ENCODE measurements at regions of chr6 and their contacts with region 1.

Region 1: GRCh38 chr6:2876210-2877056 is 26.7 kb downstream of the SERPINB9 start:
- DNase-seq: no peak
- ATAC-seq: peak; percentile 51
- H3K4me3 ChIP-seq: 0 out of 2 replicates have a peak overlapping the region, but pooled peaks have one; percentile 18
- H3K27ac ChIP-seq: no peak overlapping the region
- H3K4me1 ChIP-seq: peaks cover 36% of the 10 kb centered on the region
- H3K27me3 ChIP-seq: no peaks in the 10 kb centered on the region
- CTCF ChIP-seq: no peak
- EP300 ChIP-seq: no peak
- POLR2A ChIP-seq: no peak; the same call in 1 of the 2 replicates
- RAD21 ChIP-seq: no peak

Region 2: GRCh38 chr6:2237001-2237400 is 639.4 kb before region 1 on chr6:
- CTCF ChIA-PET with region 1: no interaction called
- POLR2A ChIA-PET with region 1: no interaction called
- RAD21 ChIA-PET with region 1: no interaction called
- SMC1A ChIA-PET with region 1: no interaction called
- in situ Hi-C with region 1: no loop called
- intact Hi-C with region 1: no loop called
- DNase-seq: no peak
- ATAC-seq: no peak
- H3K4me3 ChIP-seq: no peak overlapping the region
- H3K27ac ChIP-seq: no peak overlapping the region
- H3K4me1 ChIP-seq: peaks cover 8% of the 10 kb centered on the region
- H3K27me3 ChIP-seq: no peaks in the 10 kb centered on the region
- CTCF ChIP-seq: no peak
- EP300 ChIP-seq: no peak
- POLR2A ChIP-seq: no peak
- RAD21 ChIP-seq: no peak

Region 3: DNA sequence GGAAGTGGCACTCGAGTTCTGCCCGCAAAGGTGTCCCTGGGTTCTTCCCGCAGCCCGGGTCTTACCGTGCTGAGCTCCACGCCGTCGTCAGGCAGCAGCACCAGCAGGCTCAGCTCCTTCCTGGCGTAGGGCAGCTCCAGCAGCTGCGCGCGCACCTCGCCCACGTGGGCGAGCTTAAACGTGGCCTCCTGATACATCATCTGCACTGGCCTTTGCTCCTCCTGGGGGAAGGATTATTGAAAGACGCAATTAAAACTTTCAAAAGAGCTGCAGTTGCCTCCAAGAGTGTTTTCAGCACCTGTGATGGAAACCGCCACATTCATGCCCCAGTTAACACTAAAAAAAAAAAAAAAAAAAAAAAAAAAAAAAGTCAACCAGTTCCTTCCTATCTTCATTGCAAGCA is 15.3 kb after region 1 on chr6:
- CTCF ChIA-PET with region 1: interaction called, 17 read pairs
- POLR2A ChIA-PET with region 1: interaction called, 30 read pairs
- RAD21 ChIA-PET with region 1: interaction called, 6 read pairs
- SMC1A ChIA-PET with region 1: interaction called, 8 read pairs
- in situ Hi-C with region 1: no loop called
- intact Hi-C with region 1: no loop called
- DNase-seq: peak; percentile 89
- ATAC-seq: peak; percentile 93
- H3K4me3 ChIP-seq: peak overlapping the region; percentile 20; the same call in 1 of the 2 replicates
- H3K27ac ChIP-seq: no peak overlapping the region
- H3K4me1 ChIP-seq: peaks cover 4% of the 10 kb centered on the region; the same call in 1 of the 2 replicates
- H3K27me3 ChIP-seq: no peaks in the 10 kb centered on the region
- CTCF ChIP-seq: no peak
- EP300 ChIP-seq: peak; percentile 18 to 76; a peak in 1 of 4 replicates
- POLR2A ChIP-seq: peak; percentile 85
- RAD21 ChIP-seq: no peak

Region 4: DNA sequence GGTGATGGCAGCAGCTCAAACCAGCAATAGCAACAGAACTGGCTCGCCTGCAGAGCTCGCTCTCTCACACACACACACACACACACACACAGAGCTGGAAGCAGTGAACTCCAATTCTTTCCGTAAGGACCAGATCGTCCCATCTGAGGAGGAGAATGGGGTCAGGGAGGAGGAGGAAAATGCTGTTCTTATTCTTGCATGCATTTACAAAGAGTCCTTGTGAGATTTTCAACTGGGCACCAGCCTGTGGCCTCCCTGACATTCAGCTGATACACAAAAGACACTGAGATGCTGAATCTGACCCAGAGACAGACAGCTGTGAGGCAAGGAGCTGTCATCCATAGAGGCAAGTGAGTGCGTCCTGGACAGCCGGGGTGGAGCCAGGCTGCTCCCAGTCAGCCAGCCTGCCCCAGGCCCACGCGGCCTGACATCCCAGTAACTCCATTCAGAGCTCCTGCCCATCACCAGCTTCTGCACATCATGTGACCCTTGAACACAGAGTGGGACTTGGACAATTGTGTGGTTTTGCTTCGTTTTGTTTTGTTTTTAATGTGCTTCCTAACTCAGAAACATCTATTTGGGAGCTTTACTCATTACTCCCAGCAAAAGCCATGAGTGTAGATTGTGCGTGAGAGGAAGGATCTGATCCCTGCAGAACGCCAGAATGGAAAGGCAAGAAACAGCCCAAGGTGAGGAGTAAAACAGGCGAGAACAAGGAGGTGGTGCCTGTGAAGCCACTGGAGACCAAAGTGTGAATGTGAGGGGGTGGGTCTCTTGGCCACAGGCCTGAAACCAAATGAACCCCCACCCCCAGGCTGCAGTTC is 24.6 kb after region 1 on chr6:
- CTCF ChIA-PET with region 1: interaction called, 13 read pairs
- POLR2A ChIA-PET with region 1: interaction called, 6 read pairs
- RAD21 ChIA-PET with region 1: interaction called, 3 read pairs
- SMC1A ChIA-PET with region 1: no interaction called
- in situ Hi-C with region 1: no loop called
- intact Hi-C with region 1: no loop called
- DNase-seq: no peak
- ATAC-seq: peak; percentile 8
- H3K4me3 ChIP-seq: peak overlapping the region; percentile 57
- H3K27ac ChIP-seq: no peak overlapping the region
- H3K4me1 ChIP-seq: peaks cover 29% of the 10 kb centered on the region
- H3K27me3 ChIP-seq: no peaks in the 10 kb centered on the region; a peak in 1 of 4 replicates
- CTCF ChIP-seq: no peak
- EP300 ChIP-seq: no peak
- POLR2A ChIP-seq: 0 out of 2 replicates have a peak, but pooled peaks have one; percentile 1
- RAD21 ChIP-seq: no peak

Measured in GM12878 (cell line).